Activated B cell treated with CpG ODN at 0.5 μM for 24 hours (primary cell): ENCODE measurements at regions of chr16 and their contacts with region 1.

Region 1: GRCh38 chr16:11977376-11978041 is 975 bp downstream of the SNX29 start:
- DNase-seq: no peak
- ATAC-seq: no peak
- H3K4me3 Mint-ChIP-seq: peak overlapping the region; percentile 96
- H3K27ac Mint-ChIP-seq: peak overlapping the region; percentile 77
- H3K4me1 Mint-ChIP-seq: peaks cover 65% of the 10 kb centered on the region
- H3K27me3 Mint-ChIP-seq: no peaks in the 10 kb centered on the region
- CTCF ChIP-seq: no peak

Region 2: GRCh38 chr16:11877374-11877773 is 100.1 kb before region 1 on chr16:
- CTCF ChIA-PET with region 1: no interaction called
- POLR2A ChIA-PET with region 1: no interaction called
- intact Hi-C with region 1: no loop called
- DNase-seq: no peak
- ATAC-seq: no peak
- H3K4me3 Mint-ChIP-seq: no peak overlapping the region
- H3K27ac Mint-ChIP-seq: no peak overlapping the region
- H3K4me1 Mint-ChIP-seq: no peaks in the 10 kb centered on the region
- H3K27me3 Mint-ChIP-seq: no peaks in the 10 kb centered on the region
- CTCF ChIP-seq: no peak

Region 3: DNA sequence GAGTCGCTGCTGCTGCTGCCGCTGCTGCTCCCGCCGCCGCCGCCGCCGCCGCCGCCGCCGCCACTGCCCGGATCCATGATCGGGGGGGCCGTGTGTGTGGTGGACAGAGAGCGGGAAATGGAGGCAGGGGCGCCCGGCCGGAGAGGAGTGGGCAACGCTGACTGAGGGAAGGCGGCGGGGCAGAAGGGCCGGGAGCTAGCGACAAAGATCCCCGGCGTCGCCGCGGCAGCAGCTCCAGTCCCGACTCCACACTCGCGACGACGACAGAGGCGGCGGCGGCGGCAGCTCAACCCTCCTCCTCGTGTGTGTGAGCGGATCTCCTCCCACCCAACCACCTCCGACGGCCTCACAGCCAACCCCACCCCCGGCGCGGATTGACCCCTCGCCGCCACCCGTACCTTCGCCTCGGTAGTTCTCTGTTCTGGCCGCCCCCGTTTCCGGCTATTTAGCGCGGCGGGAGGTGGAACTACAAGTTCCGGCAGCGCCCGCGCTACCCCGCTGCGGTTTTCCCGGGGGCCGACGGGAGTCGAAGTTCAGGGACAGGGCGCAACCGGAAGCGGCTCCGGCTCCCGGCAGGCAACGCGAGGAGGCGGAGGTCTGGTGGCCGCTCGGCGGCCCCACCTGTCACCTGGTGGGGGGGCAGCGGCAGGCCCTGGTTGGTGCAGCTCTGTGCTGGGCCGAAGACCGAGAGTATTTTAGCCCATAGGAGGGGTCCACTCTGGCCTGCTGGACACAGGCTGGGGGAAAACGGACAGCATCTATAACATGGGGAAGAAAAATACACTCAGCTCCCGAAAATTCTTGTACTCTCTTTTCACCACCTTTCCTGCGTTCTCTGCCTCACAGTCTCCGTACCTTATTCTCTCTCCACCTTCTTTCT is 61.6 kb before region 1 on chr16 and contains the start of gene GSPT1:
- CTCF ChIA-PET with region 1: no interaction called
- POLR2A ChIA-PET with region 1: interaction called, 6 read pairs
- intact Hi-C with region 1: loop called (anchors 5 kb)
- DNase-seq: peak; percentile 98
- ATAC-seq: peak; percentile 93
- H3K4me3 Mint-ChIP-seq: peak within 1 kb of the TSS; percentile 89
- H3K27ac Mint-ChIP-seq: peak within 1 kb of the TSS; percentile 89
- H3K4me1 Mint-ChIP-seq: peaks cover 31% of the 10 kb centered on the region
- H3K27me3 Mint-ChIP-seq: peaks cover 4% of the 10 kb centered on the region
- CTCF ChIP-seq: no peak
- total RNA-seq, gene GSPT1: 99.9 and 101 TPM in 2 replicates

Region 4: DNA sequence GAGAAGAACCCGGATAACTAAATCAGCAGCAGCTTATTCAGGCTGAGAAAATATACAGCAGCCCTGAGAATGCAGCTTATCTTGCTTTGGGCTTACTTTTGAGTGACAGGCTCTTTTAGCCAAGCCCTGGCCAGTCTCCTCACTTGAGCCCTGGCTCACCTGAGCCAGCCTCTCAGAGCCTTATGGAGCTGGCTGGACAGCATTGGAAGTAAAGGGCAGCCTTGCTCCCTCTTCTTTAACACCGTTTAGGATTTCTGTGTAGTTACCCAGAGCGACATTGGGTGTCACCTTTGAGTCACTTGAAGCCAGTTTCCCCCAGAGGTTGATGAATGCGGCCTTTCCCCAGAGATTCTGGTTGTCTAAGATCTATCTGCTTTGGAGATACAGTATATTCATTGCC is 28.0 kb before region 1 on chr16:
- CTCF ChIA-PET with region 1: interaction called, 5 read pairs
- POLR2A ChIA-PET with region 1: interaction called, 4 read pairs
- intact Hi-C with region 1: loop called (anchors 5 kb)
- DNase-seq: no peak
- ATAC-seq: peak; percentile 99
- H3K4me3 Mint-ChIP-seq: no peak overlapping the region
- H3K27ac Mint-ChIP-seq: no peak overlapping the region
- H3K4me1 Mint-ChIP-seq: peaks cover 14% of the 10 kb centered on the region
- H3K27me3 Mint-ChIP-seq: no peaks in the 10 kb centered on the region
- CTCF ChIP-seq: peak; percentile 38

Region 5: GRCh38 chr16:11955713-11956123 is 21.8 kb before region 1 on chr16:
- CTCF ChIA-PET with region 1: interaction called, 5 read pairs
- POLR2A ChIA-PET with region 1: interaction called, 16 read pairs
- intact Hi-C with region 1: loop called (anchors 2 kb)
- DNase-seq: no peak
- ATAC-seq: no peak
- H3K4me3 Mint-ChIP-seq: no peak overlapping the region
- H3K27ac Mint-ChIP-seq: no peak overlapping the region
- H3K4me1 Mint-ChIP-seq: peaks cover 22% of the 10 kb centered on the region
- H3K27me3 Mint-ChIP-seq: no peaks in the 10 kb centered on the region
- CTCF ChIP-seq: no peak

Region 6: GRCh38 chr16:11964761-11965551 is 12.6 kb before region 1 on chr16 and contains the start of gene TNFRSF17:
- CTCF ChIA-PET with region 1: interaction called, 4 read pairs
- POLR2A ChIA-PET with region 1: interaction called, 97 read pairs
- intact Hi-C with region 1: loop called (anchors 1 kb)
- DNase-seq: no peak
- ATAC-seq: peak; percentile 64
- H3K4me3 Mint-ChIP-seq: peak within 1 kb of the TSS; percentile 80
- H3K27ac Mint-ChIP-seq: peak within 1 kb of the TSS; percentile 90
- H3K4me1 Mint-ChIP-seq: peaks cover 72% of the 10 kb centered on the region
- H3K27me3 Mint-ChIP-seq: no peaks in the 10 kb centered on the region
- CTCF ChIP-seq: no peak
- total RNA-seq, gene TNFRSF17: 6.9 and 8.0 TPM in 2 replicates

Region 7: GRCh38 chr16:11994143-11995119 is 16.9 kb after region 1 on chr16:
- CTCF ChIA-PET with region 1: interaction called, 3 read pairs
- POLR2A ChIA-PET with region 1: interaction called, 8 read pairs
- intact Hi-C with region 1: loop called (anchors 1 kb)
- DNase-seq: no peak
- ATAC-seq: peak; percentile 61
- H3K4me3 Mint-ChIP-seq: peak overlapping the region; percentile 15
- H3K27ac Mint-ChIP-seq: peak overlapping the region; percentile 50
- H3K4me1 Mint-ChIP-seq: peaks cover 79% of the 10 kb centered on the region
- H3K27me3 Mint-ChIP-seq: no peaks in the 10 kb centered on the region
- CTCF ChIP-seq: no peak

Region 8: DNA sequence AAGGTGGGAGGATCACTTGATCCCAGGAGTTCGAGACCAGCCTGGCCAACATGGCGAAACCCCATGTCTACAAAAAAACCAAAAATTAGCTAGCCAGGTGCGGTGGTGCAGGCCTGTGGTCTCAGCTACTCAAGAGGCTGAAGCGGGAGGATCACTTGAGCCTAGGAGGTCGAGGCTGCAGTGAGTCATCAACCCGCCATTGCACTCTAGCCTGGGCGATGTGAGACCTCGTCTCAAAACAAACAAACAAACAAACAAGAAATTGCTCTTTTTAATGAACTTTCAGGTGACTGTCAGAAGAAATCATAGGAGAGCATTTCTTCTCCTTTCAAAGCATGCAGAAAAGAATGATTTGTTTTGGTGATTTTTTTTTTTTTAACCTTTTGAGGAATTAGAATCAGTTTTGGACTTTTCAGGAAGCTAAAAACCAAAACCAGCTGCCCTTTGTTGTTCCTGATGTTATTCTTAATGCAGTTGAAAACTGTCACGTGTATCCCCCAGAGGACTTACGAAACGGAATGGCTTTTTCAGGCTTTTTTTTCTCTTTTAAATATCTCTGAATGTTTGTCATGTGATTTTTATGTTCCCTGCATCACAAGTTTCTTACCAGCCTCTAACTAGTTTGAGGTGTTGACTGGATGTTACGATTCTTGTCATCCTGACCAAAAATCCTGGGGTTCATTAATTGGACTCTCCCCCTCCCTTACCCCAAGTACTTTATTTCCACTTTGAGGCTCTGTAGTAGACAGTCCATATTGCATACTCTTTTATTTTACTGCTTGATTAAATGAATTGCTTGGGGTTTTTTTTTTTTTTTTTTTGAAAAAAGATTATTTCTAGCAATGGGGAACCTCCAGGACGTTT is 33.1 kb after region 1 on chr16:
- CTCF ChIA-PET with region 1: no interaction called
- POLR2A ChIA-PET with region 1: interaction called, 3 read pairs
- intact Hi-C with region 1: loop called (anchors 5 kb)
- DNase-seq: no peak
- ATAC-seq: peak; percentile 53
- H3K4me3 Mint-ChIP-seq: peak overlapping the region; percentile 63
- H3K27ac Mint-ChIP-seq: peak overlapping the region; percentile 88
- H3K4me1 Mint-ChIP-seq: peaks cover 50% of the 10 kb centered on the region
- H3K27me3 Mint-ChIP-seq: no peaks in the 10 kb centered on the region
- CTCF ChIP-seq: no peak

Region 9: DNA sequence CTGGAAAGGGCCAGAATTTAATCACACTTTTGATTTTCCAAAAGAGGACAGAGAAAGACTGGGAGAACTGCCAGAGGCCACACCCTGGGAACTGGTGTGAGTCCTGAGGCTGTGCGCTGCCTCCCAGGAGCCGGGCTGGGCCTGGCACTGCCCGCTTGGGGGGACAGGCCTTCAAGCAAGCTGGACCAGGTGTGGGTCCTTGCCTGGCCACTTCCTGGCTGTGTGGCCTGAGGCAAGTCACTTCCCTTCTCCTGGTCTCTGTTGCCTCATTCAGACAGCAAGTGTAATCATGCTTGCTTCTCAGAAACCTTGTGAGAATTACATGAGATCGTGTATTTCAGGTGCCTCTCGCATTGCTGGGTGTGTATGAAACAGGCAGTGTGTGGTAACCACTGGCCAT is 142.1 kb after region 1 on chr16:
- CTCF ChIA-PET with region 1: no interaction called
- POLR2A ChIA-PET with region 1: no interaction called
- intact Hi-C with region 1: no loop called
- DNase-seq: no peak
- ATAC-seq: no peak
- H3K4me3 Mint-ChIP-seq: no peak overlapping the region
- H3K27ac Mint-ChIP-seq: peak overlapping the region; percentile 41
- H3K4me1 Mint-ChIP-seq: peaks cover 24% of the 10 kb centered on the region
- H3K27me3 Mint-ChIP-seq: no peaks in the 10 kb centered on the region
- CTCF ChIP-seq: no peak